ENCODE measurements at regions of chr11 and their contacts with region 1.

Region 1: GRCh38 chr11:128884703-128885338 is 6.3 kb upstream of the KCNJ5 start:
- DNase-seq: peak in 1 of 2 donors; percentile 61
- ATAC-seq: peak; percentile 71 to 90 (median 82)
- H3K4me3 ChIP-seq: no peak overlapping the region
- H3K27ac ChIP-seq: no peak overlapping the region
- H3K4me1 ChIP-seq: peaks cover 0 to 2% (median 0%) of the 10 kb centered on the region in 9 donors
- H3K27me3 ChIP-seq: peaks cover 0 to 44% (median 21%) of the 10 kb centered on the region in 7 donors
- CTCF ChIP-seq: peak; percentile 80 to 94 (median 87)

Region 2: GRCh38 chr11:127709960-127710359 is 1174.9 kb before region 1 on chr11:
- intact Hi-C with region 1: loop called in 1 of 10 experiments (anchors 5 kb)
- DNase-seq: no peak
- ATAC-seq: peak in 2 of 8 donors; percentile 26 to 46
- H3K4me3 ChIP-seq: no peak overlapping the region
- H3K27ac ChIP-seq: no peak overlapping the region
- H3K4me1 ChIP-seq: no peaks in the 10 kb centered on the region
- H3K27me3 ChIP-seq: no peaks in the 10 kb centered on the region
- CTCF ChIP-seq: no peak

Region 3: DNA sequence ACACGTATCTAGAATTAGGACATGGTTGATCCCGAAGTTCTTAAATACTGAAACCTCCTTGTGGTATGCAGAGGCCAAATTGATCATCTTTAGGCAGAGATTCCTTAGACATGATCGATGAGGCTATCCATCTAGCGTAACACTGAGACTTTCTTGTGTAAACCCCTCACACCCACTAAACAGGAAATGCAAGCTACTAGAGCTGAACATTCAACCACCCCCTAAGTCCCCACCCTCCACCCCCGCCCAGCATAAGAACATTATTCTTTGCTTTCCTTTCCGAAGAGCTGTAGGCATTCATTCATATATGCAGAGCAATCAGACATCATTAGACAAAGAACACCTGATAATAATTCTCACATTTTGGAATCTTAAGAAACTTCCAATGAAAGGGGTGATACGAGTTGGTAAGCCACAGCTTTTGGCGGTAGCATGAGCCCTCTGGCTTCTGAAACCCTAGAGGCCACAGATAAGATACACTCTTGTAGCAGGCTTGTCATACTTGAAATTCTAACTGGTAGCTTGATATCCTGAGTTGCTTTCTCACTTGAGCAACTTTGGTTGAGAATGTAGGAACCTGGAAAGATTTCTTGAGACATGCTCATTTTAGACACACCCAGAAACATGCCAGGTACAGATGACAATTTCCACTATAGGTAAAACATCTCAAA is 148.8 kb before region 1 on chr11:
- intact Hi-C with region 1: no loop called
- DNase-seq: no peak
- ATAC-seq: no peak
- H3K4me3 ChIP-seq: no peak overlapping the region
- H3K27ac ChIP-seq: peak overlapping the region in 1 of 10 donors; percentile 67
- H3K4me1 ChIP-seq: peaks cover 5 to 100% (median 83%) of the 10 kb centered on the region in 9 donors
- H3K27me3 ChIP-seq: no peaks in the 10 kb centered on the region
- CTCF ChIP-seq: no peak

Region 4: DNA sequence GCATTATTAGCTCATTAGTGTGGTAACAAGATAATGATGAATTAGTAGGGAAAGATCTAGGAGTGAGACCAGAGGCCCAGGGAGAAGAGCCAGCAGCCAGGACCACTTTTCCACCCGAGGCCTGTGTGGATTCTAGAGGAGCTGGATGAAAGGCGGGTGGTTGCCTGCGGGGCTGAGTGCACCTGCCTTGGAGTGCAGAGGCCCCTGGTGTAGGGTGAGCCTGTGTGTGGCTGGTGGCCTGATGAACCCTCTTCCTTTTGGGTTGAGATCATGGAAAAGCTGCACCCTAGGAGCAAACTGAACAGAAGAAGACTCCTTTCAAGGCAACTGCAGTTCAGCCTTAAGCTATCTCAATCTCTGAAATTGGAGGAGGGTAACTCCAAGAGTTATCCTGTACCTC is 63.8 kb after region 1 on chr11:
- intact Hi-C with region 1: loop called in 1 of 10 experiments (anchors 2 kb)
- DNase-seq: no peak
- ATAC-seq: peak in 3 of 8 donors; percentile 52 to 64 (median 61)
- H3K4me3 ChIP-seq: no peak overlapping the region
- H3K27ac ChIP-seq: no peak overlapping the region
- H3K4me1 ChIP-seq: no peaks in the 10 kb centered on the region
- H3K27me3 ChIP-seq: no peaks in the 10 kb centered on the region
- CTCF ChIP-seq: peak in 6 of 9 donors; percentile 31 to 44 (median 35)

Region 5: DNA sequence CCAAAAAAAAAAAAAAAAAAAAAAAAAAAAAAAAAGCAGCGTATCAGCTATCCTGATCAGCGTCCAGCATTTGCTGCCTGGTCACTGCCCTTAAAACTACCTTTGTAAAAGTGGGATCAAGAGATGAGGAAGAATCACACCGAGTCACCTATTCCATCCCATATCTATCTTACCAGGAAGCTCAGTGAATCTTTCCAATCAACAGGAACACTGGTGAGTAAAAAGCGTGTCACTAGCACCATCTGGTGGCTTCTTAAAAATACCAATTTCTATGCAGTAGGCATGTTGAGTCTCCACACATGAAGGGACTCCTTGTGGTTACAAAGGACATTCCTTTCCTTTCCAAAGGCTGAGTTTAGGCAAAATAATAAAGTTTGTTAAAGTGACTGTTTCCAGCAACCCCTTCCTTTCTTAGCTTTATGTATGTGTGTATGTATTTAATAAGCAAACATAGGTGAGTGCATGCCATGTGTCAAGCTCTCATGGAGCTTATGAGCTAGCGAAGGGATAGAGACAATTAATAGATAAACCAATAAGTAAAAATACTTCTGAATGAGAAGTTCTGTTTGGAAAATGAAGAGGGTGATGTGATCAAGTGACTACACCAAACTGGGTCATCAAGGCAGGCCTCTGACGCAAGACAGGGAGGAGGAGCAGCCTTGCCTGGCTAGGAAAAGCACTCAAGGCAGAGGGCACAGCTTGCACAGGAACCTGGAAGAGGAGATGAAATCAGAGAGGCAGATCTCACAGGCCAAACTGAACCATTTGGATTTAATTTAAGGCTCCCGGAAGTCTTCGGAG is 71.8 kb after region 1 on chr11:
- intact Hi-C with region 1: loop called (anchors 1 to 5 kb)
- DNase-seq: peak in 1 of 2 donors; percentile 58
- ATAC-seq: peak; percentile 59 to 89 (median 83)
- H3K4me3 ChIP-seq: no peak overlapping the region
- H3K27ac ChIP-seq: no peak overlapping the region
- H3K4me1 ChIP-seq: no peaks in the 10 kb centered on the region
- H3K27me3 ChIP-seq: peaks cover 0 to 20% (median 6%) of the 10 kb centered on the region in 7 donors
- CTCF ChIP-seq: peak; percentile 43 to 82 (median 75)

Region 6: DNA sequence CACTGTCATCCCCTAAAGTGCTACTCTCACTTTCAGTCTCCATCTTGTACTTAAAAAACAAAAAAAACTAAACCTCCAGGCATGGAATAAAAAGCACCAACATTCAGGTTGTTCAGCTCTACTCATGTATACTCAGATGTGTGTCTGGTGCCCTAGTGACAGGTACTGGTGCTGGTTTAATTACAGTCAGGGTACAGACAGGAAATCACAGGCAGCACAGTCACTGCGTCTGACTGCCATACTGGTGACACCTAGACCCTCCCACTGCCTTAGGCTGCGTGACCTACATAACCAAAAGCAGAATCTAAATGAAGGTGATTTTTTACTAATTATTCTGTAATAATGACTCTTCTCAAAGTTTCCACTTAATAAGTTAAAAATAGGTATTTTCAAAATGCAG is 307.3 kb after region 1 on chr11 and contains the start of gene ARHGAP32:
- intact Hi-C with region 1: no loop called
- DNase-seq: no peak
- ATAC-seq: no peak
- H3K4me3 ChIP-seq: no peak within 1 kb of the TSS
- H3K27ac ChIP-seq: no peak within 1 kb of the TSS
- H3K4me1 ChIP-seq: peaks cover 0 to 6% (median 0%) of the 10 kb centered on the region in 9 donors
- H3K27me3 ChIP-seq: no peaks in the 10 kb centered on the region
- CTCF ChIP-seq: no peak
- total RNA-seq, gene ARHGAP32: 3.2 to 8.7 (median 5.0) TPM

Measured in heart right ventricle (tissue), 16 donors.